WTC11 (cell line): ENCODE measurements at regions of chr2 and their contacts with region 1.

Region 1: DNA sequence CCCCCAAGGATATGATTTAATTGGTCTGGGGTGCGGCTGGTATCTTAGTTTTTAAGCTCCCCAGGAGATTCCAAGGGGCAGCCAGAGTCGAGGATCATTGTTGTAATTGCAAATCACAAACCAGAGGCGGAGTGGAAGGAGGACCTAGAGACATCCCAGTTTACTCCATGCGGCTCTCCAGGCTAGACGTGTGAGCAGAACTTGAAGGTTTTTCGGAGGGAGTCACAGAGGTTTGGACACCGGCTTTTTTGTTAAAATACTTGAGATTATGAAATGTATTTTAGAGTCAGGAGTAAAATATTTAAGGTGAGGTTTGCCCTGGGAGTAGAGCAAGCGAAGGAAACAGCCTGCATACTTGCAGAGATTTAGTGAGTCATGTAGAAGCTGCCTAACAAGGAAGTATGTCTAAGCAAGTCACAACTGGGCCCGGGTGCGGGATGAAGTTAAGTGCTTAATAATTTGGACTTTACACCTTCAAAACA is 39.5 kb downstream of the TGOLN2 start:
- DNase-seq: no peak
- ATAC-seq: peak; percentile 39
- H3K4me3 Mint-ChIP-seq: no peak overlapping the region
- H3K27ac Mint-ChIP-seq: peak overlapping the region; percentile 74; the same call in 1 of the 2 replicates
- H3K4me1 Mint-ChIP-seq: peaks cover 39% of the 10 kb centered on the region
- H3K27me3 Mint-ChIP-seq: no peaks in the 10 kb centered on the region
- CTCF ChIP-seq: no peak

Region 2: DNA sequence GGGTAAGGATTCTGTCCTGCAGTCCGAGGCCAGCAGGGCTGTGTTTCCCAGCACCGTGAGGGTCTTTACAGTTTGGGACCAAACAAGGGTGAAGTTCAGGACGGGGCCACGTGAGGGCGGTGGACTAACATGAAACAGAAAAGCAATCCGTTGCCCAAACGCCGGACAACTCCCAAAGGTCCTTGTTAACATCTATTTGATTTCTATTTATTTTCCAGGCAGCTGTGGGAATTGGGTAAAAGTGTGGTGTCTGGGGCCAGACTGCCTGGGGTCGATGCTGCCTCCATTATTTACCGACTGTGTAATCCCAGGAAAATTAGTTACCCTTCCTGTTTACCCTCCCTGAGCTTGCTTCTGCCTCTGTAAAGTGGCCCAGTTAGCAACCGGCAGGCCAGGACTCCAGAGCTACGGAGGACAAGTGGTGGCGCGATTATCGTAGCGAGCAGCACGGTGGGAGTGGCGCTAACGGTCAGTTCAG is 221.4 kb before region 1 on chr2:
- CTCF ChIA-PET with region 1: interaction called, 29 read pairs
- POLR2A ChIA-PET with region 1: interaction called, 3 read pairs
- DNase-seq: peak; percentile 93
- ATAC-seq: peak; percentile 86
- H3K4me3 Mint-ChIP-seq: peak overlapping the region; percentile 55
- H3K27ac Mint-ChIP-seq: no peak overlapping the region
- H3K4me1 Mint-ChIP-seq: peaks cover 25% of the 10 kb centered on the region
- H3K27me3 Mint-ChIP-seq: peaks cover 30% of the 10 kb centered on the region
- CTCF ChIP-seq: peak; percentile 66

Region 3: GRCh38 chr2:85162746-85163301 is 125.5 kb before region 1 on chr2:
- CTCF ChIA-PET with region 1: interaction called, 10 read pairs
- POLR2A ChIA-PET with region 1: no interaction called
- DNase-seq: no peak
- ATAC-seq: no peak
- H3K4me3 Mint-ChIP-seq: no peak overlapping the region
- H3K27ac Mint-ChIP-seq: peak overlapping the region; percentile 75
- H3K4me1 Mint-ChIP-seq: peaks cover 81% of the 10 kb centered on the region
- H3K27me3 Mint-ChIP-seq: no peaks in the 10 kb centered on the region
- CTCF ChIP-seq: no peak

Region 4: GRCh38 chr2:85248773-85249509 is 39.3 kb before region 1 on chr2:
- CTCF ChIA-PET with region 1: interaction called, 13 read pairs
- POLR2A ChIA-PET with region 1: no interaction called
- DNase-seq: no peak
- ATAC-seq: peak; percentile 14
- H3K4me3 Mint-ChIP-seq: peak overlapping the region; percentile 50
- H3K27ac Mint-ChIP-seq: peak overlapping the region; percentile 97
- H3K4me1 Mint-ChIP-seq: peaks cover 96% of the 10 kb centered on the region
- H3K27me3 Mint-ChIP-seq: no peaks in the 10 kb centered on the region
- CTCF ChIP-seq: no peak

Region 5: GRCh38 chr2:85266146-85267041 is 21.9 kb before region 1 on chr2:
- CTCF ChIA-PET with region 1: interaction called, 14 read pairs
- POLR2A ChIA-PET with region 1: no interaction called
- DNase-seq: peak; percentile 85
- ATAC-seq: peak; percentile 63
- H3K4me3 Mint-ChIP-seq: no peak overlapping the region
- H3K27ac Mint-ChIP-seq: peak overlapping the region; percentile 67
- H3K4me1 Mint-ChIP-seq: peaks cover 72% of the 10 kb centered on the region
- H3K27me3 Mint-ChIP-seq: no peaks in the 10 kb centered on the region
- CTCF ChIP-seq: peak; percentile 95

Region 6: DNA sequence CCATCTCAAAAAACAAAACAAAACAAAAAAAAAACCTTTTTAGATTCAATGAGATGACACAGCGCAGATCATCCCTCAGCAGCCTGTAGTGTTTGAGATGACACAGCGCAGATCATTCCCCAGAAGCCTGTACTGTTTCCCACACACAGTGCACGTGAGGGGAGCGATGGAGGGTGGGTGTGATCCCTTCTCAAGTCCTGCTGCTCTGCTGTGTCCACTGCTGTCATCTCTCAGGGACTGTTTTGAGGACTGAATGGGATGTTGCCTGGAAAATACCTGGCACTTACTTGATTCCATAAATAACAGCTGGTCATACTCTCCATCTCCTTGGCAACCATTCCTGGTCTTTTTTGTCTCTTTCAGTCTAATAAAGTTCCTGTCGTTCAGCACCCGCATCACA is 13.8 kb after region 1 on chr2:
- CTCF ChIA-PET with region 1: interaction called, 44 read pairs
- POLR2A ChIA-PET with region 1: no interaction called
- DNase-seq: no peak
- ATAC-seq: no peak
- H3K4me3 Mint-ChIP-seq: no peak overlapping the region
- H3K27ac Mint-ChIP-seq: no peak overlapping the region
- H3K4me1 Mint-ChIP-seq: peaks cover 11% of the 10 kb centered on the region
- H3K27me3 Mint-ChIP-seq: no peaks in the 10 kb centered on the region
- CTCF ChIP-seq: no peak

Region 7: DNA sequence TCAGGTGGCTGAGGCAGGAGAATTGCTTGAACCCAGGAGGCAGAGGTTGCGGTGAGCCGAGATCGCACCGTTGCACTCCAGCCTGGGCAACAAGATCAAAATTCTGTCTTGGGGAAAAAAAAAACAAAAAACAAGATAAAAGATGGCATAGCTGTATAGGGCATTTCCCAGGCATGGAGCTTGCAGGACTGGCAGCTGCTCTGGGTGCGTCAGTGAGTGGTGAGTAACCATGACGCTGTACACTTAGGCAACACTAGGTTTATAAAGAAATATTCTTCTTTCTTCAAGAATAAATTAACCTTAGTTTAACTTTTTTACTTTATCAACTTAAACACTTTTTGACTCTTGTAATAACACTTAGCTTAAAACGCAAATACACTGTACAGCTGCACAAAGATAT is 24.1 kb after region 1 on chr2:
- CTCF ChIA-PET with region 1: no interaction called
- POLR2A ChIA-PET with region 1: no interaction called
- DNase-seq: no peak
- ATAC-seq: no peak
- H3K4me3 Mint-ChIP-seq: no peak overlapping the region
- H3K27ac Mint-ChIP-seq: no peak overlapping the region
- H3K4me1 Mint-ChIP-seq: peaks cover 19% of the 10 kb centered on the region
- H3K27me3 Mint-ChIP-seq: no peaks in the 10 kb centered on the region
- CTCF ChIP-seq: no peak

Region 8: DNA sequence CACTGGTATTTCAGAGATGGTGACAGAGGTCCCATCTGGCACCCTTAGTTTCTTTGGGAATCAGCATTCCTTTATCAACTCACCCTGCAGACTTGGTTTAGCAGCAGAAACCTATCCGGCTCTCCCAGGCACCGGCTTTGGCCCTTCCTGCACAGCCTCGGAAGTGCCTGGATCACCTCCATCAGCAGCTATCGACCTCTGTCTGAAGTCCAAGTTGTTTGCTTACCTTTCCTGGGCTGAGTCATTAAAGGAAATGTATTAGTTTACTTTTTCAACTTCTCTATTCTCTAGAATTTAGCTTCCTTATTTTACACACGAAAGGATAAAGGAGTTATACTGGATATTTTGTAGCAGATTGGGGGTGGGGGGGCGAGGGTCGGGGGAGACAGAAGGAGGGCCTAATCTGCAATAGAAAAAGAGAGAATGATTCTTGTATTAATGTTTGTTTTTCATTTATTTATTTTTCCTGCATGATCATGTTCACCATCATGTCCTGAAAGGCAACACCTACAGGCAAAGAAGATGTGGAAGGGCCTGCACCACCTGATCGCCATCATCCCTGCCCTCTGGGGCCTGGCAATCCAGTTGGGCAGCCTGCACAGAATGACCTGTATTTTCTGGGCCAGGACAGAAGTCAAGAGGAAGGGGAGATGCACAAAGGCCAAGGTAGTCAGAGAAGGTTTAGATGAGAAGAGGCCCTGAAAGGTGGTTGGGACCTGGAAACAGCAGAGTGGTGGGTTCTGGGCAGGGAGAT is 228.5 kb after region 1 on chr2:
- CTCF ChIA-PET with region 1: no interaction called
- POLR2A ChIA-PET with region 1: no interaction called
- DNase-seq: no peak
- ATAC-seq: no peak
- H3K4me3 Mint-ChIP-seq: no peak overlapping the region
- H3K27ac Mint-ChIP-seq: no peak overlapping the region
- H3K4me1 Mint-ChIP-seq: no peaks in the 10 kb centered on the region
- H3K27me3 Mint-ChIP-seq: no peaks in the 10 kb centered on the region; the same call in 1 of the 2 replicates
- CTCF ChIP-seq: no peak